ENCODE measurements at regions of chr17 and their contacts with region 1.

Region 1: GRCh38 chr17:48074315-48075081 is 26.3 kb downstream of the NFE2L1 start:
- DNase-seq: peak in 1 of 2 experiments; percentile 83
- H3K4me3 ChIP-seq: no peak overlapping the region
- H3K27ac ChIP-seq: no peak overlapping the region
- H3K4me1 ChIP-seq: no peaks in the 10 kb centered on the region
- H3K27me3 ChIP-seq: no peaks in the 10 kb centered on the region
- CTCF ChIP-seq: peak in 2 of 3 experiments; percentile 75 to 77; a peak in 3 of 4 replicates
- EP300 ChIP-seq: no peak
- POLR2A ChIP-seq: no peak
- RAD21 ChIP-seq: peak; percentile 67 to 75

Region 2: DNA sequence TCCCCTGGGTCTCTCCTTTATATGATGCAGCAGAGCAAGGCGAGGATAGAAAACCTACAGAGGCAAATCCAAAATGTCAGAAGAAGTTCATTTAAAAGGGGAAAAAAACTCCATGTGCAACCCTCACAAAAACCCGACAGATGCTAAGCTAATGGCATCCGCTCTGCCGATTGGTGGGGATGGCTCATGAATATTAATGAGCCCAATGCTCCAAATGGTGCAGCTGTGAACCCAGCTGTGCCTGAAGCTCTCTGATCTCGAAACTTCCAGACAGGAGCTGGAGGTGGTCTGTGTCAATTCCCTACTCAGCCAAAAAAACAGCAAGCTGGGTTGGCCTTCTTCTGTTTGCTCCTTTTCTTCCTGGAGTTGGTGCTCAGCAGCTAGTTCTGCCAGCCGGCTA is 48.6 kb after region 1 on chr17:
- CTCF ChIA-PET with region 1: interaction called, 53 read pairs
- POLR2A ChIA-PET with region 1: no interaction called
- DNase-seq: no peak
- H3K4me3 ChIP-seq: no peak overlapping the region
- H3K27ac ChIP-seq: no peak overlapping the region
- H3K4me1 ChIP-seq: no peaks in the 10 kb centered on the region
- H3K27me3 ChIP-seq: no peaks in the 10 kb centered on the region
- CTCF ChIP-seq: no peak
- EP300 ChIP-seq: no peak
- POLR2A ChIP-seq: no peak
- RAD21 ChIP-seq: no peak